Panc1 (cell line): ENCODE measurements at regions of chr13 and their contacts with region 1.

Region 1: DNA sequence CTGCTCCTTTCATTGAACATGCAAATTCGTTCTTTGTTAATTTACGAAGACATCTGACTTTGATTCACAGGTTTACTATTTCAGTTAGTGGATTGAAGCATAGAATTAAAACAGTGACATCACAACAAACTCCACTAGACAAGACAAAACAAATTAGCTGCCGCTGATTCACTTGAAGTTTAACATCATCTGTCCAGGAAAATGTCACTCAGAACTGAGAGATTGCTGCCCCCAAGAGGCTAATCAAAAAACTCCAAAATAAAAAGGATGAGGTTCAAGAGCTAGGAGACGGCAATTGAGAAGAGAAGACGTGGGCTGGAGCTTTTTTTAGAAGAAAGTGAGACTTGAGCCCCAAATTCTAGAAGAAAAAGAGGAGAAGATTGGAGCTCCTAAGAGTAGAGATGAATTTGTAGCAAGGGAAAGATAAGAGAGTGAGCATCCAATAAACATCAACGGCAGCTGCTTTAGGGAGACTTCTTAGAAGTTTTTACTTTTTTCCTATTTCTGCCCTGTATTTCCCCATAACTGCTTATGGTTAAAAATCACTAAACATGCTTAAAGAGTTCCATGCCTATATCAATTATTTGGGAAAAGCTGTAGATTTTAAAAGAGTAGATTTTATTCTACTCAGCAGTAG is 40.8 kb upstream of the TPP2 start:
- DNase-seq: peak; percentile 20
- ATAC-seq: peak; percentile 71; the same call in 1 of the 2 replicates
- H3K4me3 ChIP-seq: no peak overlapping the region
- H3K27ac ChIP-seq: no peak overlapping the region
- H3K4me1 ChIP-seq: no peaks in the 10 kb centered on the region
- H3K27me3 ChIP-seq: no peaks in the 10 kb centered on the region
- CTCF ChIP-seq: peak; percentile 44; the same call in 1 of the 2 replicates

Region 2: DNA sequence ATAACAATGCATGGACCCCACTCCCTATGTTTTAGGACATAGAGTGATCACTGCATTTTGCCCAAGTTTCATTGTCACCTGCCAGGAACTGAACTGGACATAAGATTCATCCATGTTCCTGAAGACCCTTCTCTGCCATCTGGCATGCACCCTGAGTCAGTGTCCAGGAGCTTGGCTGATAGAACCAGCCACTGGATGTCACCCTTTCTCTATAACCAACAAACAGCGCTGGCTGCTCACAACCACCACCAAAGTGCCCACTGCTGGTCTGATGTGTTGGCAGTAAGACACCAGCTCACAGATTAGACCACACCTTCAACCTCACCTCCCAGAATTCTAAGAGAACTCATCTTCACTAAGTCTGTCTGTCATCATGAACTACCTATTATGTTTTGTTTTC is 770.2 kb before region 1 on chr13:
- CTCF ChIA-PET with region 1: no interaction called
- POLR2A ChIA-PET with region 1: no interaction called
- in situ Hi-C with region 1: no loop called
- intact Hi-C with region 1: loop called (anchors 10 kb)
- DNase-seq: peak; percentile 4
- ATAC-seq: peak; percentile 94
- H3K4me3 ChIP-seq: no peak overlapping the region
- H3K27ac ChIP-seq: no peak overlapping the region
- H3K4me1 ChIP-seq: no peaks in the 10 kb centered on the region
- H3K27me3 ChIP-seq: no peaks in the 10 kb centered on the region
- CTCF ChIP-seq: peak; percentile 54

Region 3: DNA sequence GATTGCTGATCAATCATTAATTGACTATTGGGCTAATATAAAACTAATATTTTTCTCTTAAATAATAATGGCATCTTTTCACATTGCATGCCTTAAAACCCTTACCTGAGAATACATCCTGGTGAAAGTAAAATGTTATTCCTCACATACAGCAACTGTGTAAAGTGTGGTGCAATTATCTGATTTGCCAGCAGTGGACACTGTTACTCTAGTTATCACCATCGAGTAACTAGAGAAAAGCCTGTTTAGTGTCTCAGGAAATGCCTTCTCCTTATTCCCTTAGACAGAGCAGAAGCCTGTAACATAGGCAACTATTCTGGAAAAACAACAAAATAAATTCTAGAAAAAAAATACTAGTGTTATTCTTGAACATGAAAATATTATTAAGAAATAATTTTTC is 614.0 kb before region 1 on chr13:
- CTCF ChIA-PET with region 1: no interaction called
- POLR2A ChIA-PET with region 1: no interaction called
- in situ Hi-C with region 1: no loop called
- intact Hi-C with region 1: loop called (anchors 5 kb)
- DNase-seq: peak; percentile 13
- ATAC-seq: peak; percentile 82
- H3K4me3 ChIP-seq: no peak overlapping the region
- H3K27ac ChIP-seq: no peak overlapping the region
- H3K4me1 ChIP-seq: no peaks in the 10 kb centered on the region
- H3K27me3 ChIP-seq: peaks cover 3% of the 10 kb centered on the region; the same call in 1 of the 2 replicates
- CTCF ChIP-seq: peak; percentile 58; the same call in 1 of the 2 replicates

Region 4: DNA sequence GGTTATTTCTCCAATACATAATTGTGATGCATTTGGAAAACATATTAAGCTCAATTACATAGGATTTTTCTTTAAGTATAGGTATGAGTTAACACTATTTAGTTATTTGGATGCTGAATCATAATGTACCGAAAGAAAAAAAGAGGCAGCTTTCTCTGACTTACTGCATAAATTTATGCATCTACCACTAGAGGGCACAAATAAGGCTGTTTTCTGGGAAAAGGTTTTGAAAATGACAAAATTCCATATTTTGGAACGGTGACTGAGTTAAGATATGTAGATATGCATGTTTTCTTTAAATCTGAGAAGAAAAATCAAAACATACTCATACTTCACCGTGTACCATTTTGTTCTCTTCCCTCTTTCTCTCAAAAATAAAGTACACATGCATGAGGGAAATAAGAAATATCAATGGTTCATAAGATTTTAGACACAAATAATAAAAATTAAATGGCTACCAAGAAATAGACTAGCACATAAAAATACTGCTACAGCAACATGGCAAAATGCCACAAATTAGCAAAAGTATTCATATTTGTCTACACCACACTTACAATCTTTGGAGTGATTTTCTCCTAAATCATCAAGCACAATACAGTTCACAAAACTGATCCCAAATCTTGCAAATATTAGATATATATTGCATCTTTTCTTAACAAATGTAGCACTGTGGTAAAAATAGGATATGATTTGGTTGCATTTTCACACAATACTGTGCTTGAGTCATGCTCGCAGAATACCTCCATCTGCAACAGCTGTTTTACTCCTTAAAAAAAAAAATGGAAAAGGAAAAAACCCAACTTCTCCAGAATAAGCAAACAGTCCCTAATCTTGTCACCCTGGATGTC is 414.2 kb before region 1 on chr13:
- CTCF ChIA-PET with region 1: interaction called, 11 read pairs
- POLR2A ChIA-PET with region 1: no interaction called
- in situ Hi-C with region 1: no loop called
- intact Hi-C with region 1: no loop called
- DNase-seq: no peak
- ATAC-seq: no peak
- H3K4me3 ChIP-seq: no peak overlapping the region
- H3K27ac ChIP-seq: no peak overlapping the region
- H3K4me1 ChIP-seq: no peaks in the 10 kb centered on the region
- H3K27me3 ChIP-seq: no peaks in the 10 kb centered on the region
- CTCF ChIP-seq: peak; percentile 48; the same call in 1 of the 2 replicates

Region 5: DNA sequence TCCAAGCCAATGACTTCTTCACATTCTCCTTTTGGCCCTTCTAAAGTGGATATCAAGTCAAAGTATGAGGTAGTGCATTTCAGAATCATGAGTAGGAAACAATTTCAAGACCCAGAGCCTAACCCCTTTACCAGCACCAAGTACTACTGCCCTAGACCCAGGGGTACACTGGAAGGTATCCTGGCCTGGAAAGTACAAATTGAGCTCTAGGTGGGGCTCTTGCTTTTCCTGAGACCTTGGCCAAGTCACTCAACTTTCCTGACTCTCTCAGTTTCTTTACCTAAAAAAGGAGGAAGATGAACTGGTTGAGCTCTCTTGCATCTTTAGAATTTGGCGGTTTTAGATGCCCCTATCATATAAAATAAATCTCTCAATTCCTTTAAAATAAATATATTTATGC is 358.8 kb before region 1 on chr13:
- CTCF ChIA-PET with region 1: no interaction called
- POLR2A ChIA-PET with region 1: no interaction called
- in situ Hi-C with region 1: no loop called
- intact Hi-C with region 1: loop called (anchors 10 kb)
- DNase-seq: no peak
- ATAC-seq: no peak; the same call in 1 of the 2 replicates
- H3K4me3 ChIP-seq: no peak overlapping the region
- H3K27ac ChIP-seq: no peak overlapping the region
- H3K4me1 ChIP-seq: no peaks in the 10 kb centered on the region
- H3K27me3 ChIP-seq: no peaks in the 10 kb centered on the region
- CTCF ChIP-seq: no peak; the same call in 1 of the 2 replicates

Region 6: DNA sequence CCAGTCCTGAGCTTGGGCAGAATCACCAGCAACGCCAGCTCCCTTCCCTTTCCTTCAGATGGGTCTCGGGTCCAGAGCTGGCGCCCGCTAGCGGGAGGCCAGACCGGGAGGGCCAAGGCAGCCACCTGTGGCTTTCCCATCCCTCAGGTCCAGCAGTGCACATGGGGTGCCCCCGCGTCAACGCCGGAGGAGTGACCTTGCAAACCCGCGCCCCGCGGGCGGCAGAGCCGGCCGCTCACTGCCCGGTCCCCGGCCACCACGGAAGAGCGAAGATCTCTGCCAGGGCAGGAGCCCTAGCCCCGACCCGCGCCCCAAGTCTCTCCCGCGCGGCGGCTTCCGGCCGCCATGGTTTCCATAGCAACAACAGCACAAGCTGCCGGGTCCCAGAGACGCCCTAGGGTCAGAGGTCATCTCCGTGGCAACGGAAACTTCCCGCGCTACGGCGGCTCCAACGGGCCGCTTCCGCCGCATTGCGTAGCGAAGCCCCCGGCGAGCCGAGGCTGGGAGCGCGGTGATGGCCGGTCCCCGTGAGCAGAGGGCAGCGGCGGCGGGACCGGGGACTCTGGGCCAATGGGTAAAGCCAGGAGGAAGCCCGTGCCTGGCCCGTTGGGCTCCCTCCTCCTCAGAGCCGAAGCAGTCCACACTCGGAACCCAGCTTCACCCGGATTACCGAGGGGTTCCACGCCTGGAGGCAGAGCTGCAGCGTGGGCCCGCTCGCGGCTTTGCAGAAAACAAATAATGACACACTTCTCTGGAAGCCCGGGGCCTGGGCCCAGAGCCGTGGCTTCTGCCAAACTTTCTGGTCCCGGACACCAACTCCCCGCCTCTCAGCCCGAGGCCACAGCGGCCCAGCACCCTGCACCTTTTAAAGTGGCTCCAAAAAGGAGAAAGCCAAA is 161.6 kb before region 1 on chr13:
- CTCF ChIA-PET with region 1: interaction called, 3 read pairs
- POLR2A ChIA-PET with region 1: no interaction called
- in situ Hi-C with region 1: no loop called
- intact Hi-C with region 1: loop called (anchors 10 kb)
- DNase-seq: peak; percentile 17
- ATAC-seq: peak; percentile 92
- H3K4me3 ChIP-seq: peak overlapping the region; percentile 71 to 82
- H3K27ac ChIP-seq: peak overlapping the region; percentile 78
- H3K4me1 ChIP-seq: no peaks in the 10 kb centered on the region
- H3K27me3 ChIP-seq: no peaks in the 10 kb centered on the region; the same call in 1 of the 2 replicates
- CTCF ChIP-seq: peak; percentile 41